Left ventricle myocardium superior (tissue), 1 donor: ENCODE measurements at regions of chr4 and their contacts with region 1.

Region 1: GRCh38 chr4:57037982-57038604 is 59.4 kb downstream of the POLR2B start:
- DNase-seq: peak; percentile 84
- ATAC-seq: peak; percentile 67

Region 2: GRCh38 chr4:56301181-56302076 is 736.7 kb before region 1 on chr4:
- intact Hi-C with region 1: no loop called
- DNase-seq: peak; percentile 62
- ATAC-seq: peak; percentile 94

Region 3: DNA sequence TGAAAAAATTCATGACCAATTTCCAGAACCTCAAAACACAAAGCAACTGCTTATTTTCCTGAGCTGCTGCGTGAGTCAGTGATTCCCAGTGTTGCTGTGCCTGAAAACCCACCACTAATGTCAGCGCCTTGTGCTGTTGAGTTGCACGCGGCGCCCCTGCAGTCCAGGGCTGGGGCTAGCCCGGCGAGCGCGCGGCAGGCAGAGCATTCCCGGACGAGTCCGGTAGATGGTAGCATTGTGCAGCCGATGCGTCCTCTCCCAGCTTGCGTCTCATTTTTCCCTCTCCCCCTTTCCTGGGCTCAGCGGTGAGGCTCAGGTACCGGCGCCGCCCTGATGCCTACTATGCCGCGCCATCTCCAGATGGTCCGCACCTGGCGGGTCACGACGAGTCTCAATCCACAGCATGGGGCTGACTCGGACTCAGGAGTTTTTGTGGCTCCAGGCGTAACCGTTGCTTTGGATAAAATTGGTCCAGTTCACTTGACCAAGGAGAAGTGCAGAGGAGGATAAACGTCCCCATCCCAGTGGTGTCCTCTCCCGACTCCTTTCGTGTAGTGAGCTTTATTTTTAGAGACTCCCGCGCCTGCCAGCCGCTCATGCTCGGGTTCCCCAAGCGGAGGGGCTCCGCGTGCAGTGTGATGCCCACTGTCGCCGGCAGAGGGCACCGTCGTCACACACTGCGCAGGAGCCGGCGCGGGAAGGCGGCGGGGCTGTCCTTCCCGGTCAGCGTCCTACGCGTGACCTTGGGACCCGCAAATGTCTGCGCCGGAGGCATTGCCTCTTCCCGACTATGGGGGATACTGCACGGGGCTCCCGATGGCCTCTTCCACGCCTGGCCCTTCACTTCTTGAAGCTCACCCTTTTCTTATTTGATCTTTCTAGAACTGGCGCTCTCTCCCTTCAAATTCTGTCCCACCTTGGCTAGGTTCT is 125.7 kb after region 1 on chr4:
- intact Hi-C with region 1: loop called (anchors 5 kb)
- DNase-seq: peak; percentile 90
- ATAC-seq: peak; percentile 98

Region 4: GRCh38 chr4:57249083-57249482 is 211.0 kb after region 1 on chr4:
- intact Hi-C with region 1: no loop called
- DNase-seq: no peak
- ATAC-seq: no peak